ENCODE measurements at regions of chr4 and their contacts with region 1.

Region 1: GRCh38 chr4:186067757-186068385 is 1.1 kb upstream of the TLR3 start:
- DNase-seq: no peak
- H3K4me3 ChIP-seq: no peak overlapping the region
- CTCF ChIP-seq: peak; percentile 10

Region 2: DNA sequence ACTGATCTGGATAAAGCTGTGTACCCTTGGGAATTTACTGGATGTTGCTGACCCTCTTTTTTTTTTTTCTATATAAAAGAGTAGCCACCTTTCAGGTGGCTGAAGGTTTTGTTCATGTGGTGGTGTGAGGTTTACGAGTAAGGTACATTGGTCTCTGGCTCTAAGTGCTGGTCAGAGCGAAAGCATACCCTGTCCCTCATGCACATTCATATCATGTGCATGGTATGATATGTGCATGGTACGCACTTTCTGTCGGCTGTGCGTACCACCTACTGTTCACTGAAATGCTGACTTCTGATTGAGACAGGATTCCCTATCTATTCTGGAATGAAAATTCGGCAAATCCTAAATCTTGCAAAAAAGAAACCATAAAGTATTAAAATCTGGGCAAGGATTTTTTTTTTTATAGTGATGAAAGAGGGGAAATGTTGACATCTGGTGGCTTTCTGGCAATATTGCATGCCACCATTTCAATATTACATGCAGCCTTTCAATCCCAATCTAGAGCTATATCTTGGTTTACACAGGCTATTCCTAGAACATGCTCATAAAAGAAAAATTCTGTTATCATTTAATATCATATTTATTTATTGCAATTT is 69.4 kb after region 1 on chr4:
- CTCF ChIA-PET with region 1: interaction called, 11 read pairs
- POLR2A ChIA-PET with region 1: no interaction called
- DNase-seq: no peak
- H3K4me3 ChIP-seq: no peak overlapping the region
- CTCF ChIP-seq: peak; percentile 40

Region 3: GRCh38 chr4:186172546-186172945 is 104.7 kb after region 1 on chr4:
- CTCF ChIA-PET with region 1: no interaction called
- POLR2A ChIA-PET with region 1: no interaction called
- DNase-seq: no peak
- H3K4me3 ChIP-seq: no peak overlapping the region
- CTCF ChIP-seq: no peak

Region 4: GRCh38 chr4:186416451-186417060 is 348.7 kb after region 1 on chr4:
- CTCF ChIA-PET with region 1: no interaction called
- POLR2A ChIA-PET with region 1: no interaction called
- DNase-seq: no peak
- H3K4me3 ChIP-seq: no peak overlapping the region
- CTCF ChIP-seq: no peak

Measured in AG04449 (cell line).